ENCODE measurements at regions of chr11 and their contacts with region 1.

Region 1: GRCh38 chr11:72793425-72794367 is at the start of gene STARD10:
- DNase-seq: peak; percentile 98
- CTCF ChIP-seq: peak; percentile 84

Region 2: GRCh38 chr11:72727521-72727920 is 66.2 kb before region 1 on chr11:
- CTCF ChIA-PET with region 1: interaction called, 76 read pairs
- POLR2A ChIA-PET with region 1: interaction called, 3 read pairs
- DNase-seq: no peak
- CTCF ChIP-seq: no peak

Region 3: GRCh38 chr11:72771507-72771906 is 22.2 kb before region 1 on chr11:
- CTCF ChIA-PET with region 1: interaction called, 88 read pairs
- POLR2A ChIA-PET with region 1: interaction called, 3 read pairs
- DNase-seq: no peak
- CTCF ChIP-seq: no peak

Region 4: DNA sequence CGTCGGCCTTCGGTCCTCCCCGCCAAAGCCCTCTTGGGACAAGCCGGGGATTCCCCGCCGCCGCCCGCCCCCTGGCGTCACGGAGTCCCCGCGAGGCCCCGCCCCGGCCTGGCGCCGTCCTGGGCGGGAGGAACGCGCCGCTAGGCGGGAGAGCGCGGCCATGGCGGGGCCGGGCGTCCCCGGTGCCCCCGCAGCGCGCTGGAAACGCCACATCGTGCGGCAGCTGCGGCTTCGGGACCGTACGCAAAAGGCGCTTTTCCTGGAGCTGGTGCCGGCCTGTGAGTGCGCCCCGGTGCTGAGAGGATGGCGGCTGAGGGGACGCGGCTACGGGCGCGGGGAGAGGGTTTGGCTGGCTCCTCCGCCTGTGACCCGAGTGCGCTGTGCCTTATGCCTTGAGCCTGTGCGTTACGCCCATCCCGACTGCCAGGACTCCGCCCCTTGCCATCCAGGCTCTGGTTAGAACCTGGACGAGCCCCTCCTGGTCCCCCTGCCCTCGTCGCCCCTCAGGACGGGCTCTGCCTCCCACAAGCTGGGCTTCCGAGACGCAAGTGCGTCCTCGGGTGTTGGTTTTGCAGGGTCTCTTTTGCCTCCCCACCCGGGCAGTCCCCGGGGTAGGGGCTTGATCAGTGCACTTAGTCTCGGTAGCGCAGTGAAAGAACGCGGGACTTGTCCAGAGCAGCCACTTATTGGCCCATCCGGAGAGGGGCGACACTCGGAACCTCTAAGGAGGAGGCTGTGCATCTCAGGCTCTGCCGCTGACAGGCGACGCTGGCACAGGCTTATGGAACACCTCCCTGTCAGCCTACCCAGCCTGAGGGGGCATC is 20.8 kb after region 1 on chr11 and contains the start of gene ATG16L2:
- CTCF ChIA-PET with region 1: interaction called, 76 read pairs
- POLR2A ChIA-PET with region 1: interaction called, 6 read pairs
- DNase-seq: peak; percentile 95
- CTCF ChIP-seq: peak; percentile 25